Activated CD8-positive, alpha-beta memory T cell treated with anti-CD3 and anti-CD28 coated beads, Interleukin-2, amount 10 ng/mL, durations not matched to agents 7 days and 5 days (primary cell): ENCODE measurements at regions of chr2 and their contacts with region 1.

Region 1: DNA sequence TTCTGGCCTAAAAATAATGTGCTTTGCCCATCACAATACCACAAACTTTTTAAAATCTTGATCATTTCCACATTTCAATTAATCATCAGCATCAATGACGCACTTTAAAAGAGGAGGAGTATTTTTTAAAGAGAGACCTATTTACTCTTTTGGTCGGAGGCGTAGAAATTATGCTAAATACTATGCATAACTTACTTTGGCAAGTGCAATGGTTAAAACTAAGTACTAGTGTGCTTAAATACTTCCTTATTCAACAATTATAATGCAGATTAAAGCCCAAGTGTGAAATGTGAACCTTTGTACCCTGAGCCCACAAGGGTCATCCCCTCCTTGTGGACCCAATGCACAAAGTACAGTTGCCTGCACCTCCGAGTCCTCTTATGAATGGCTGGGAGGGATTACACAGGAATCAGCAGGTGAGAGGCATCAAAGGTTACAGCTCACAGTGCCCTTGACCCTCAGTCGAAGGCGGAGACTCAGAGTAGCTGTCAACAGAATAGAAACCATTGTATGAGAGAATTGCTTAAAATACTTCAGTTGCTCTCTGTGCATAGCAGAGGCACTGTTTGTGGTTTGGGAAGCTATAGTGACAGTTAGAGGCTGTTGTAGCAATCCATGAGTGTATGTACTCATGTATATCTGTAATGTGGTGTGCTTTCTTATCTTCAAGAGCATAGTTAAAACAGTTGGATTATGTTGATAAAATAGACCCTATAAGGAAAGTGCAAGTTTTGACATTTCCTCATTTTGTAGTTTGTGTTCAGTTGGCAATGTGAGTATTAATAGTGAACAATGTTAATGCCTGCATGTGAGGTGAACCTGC is 151.7 kb upstream of the ITGA4 start:
- DNase-seq: peak; percentile 89
- ATAC-seq: peak; percentile 80
- H3K4me3 Mint-ChIP-seq: peak overlapping the region; percentile 59
- H3K27ac Mint-ChIP-seq: peak overlapping the region; percentile 95
- H3K4me1 Mint-ChIP-seq: peaks cover 77% of the 10 kb centered on the region
- H3K27me3 Mint-ChIP-seq: no peaks in the 10 kb centered on the region

Region 2: DNA sequence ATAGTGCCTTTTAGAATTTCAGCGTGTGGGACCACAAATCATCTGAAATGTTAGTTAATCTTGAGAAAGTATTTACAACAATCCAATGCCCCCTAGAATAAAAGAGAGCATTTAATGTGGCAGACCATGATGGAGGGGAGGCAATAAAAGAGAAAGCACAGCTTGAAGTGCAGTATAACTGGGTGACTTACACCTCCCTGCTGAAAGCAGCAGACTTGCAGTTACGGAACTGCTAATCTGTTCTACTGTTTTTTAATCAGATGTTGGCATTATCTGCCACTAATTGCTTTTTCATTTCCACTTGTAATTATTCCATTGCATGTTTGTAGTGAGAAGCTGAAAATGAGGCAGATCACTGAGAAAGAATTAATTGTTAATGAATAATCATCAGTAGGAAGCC is 21.1 kb after region 1 on chr2:
- CTCF ChIA-PET with region 1: no interaction called
- DNase-seq: no peak
- ATAC-seq: no peak
- H3K4me3 Mint-ChIP-seq: no peak overlapping the region
- H3K27ac Mint-ChIP-seq: no peak overlapping the region
- H3K4me1 Mint-ChIP-seq: peaks cover 6% of the 10 kb centered on the region
- H3K27me3 Mint-ChIP-seq: no peaks in the 10 kb centered on the region

Region 3: DNA sequence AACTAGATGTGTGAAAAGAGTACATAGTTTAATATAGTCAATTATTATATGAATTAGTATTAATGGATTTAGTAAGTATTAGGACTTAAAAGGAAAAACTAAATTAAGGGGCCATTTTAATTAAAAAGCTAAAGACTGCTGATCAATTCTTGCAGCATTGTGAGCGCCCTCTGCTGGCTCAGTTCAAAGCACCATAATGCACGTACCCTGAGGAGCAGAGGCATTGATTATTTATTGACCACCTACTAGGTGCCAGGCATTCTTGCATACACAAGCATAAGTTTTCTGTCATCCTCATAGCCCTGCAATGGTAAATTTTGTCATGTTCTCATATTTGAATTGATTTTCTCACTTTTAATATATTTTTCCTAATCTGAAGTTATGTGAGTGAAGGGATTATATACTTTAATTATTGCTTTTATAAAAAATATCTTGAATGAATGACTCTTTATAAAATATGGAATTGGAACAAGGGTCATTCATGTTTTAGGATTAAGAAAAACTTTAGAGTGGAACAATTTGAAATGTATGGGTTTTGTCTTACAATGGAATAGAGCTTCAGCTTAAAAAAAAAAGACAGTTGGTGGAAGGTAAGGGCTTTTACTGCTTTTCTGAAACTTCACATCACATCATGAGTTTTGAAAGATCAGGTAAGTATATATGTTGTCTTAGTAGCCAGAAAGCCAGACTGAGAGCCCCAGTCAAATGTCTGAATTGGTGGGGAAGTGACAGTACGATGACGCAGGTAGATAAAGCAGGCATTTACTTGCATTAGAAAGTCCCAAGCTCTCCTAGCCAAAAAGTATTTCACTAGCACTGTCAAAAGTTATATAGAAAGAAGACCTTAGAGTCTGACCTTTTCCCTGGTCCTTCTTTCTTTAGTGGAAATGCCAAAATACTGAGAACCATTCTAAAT is 161.4 kb after region 1 on chr2:
- CTCF ChIA-PET with region 1: interaction called, 16 read pairs
- DNase-seq: peak; percentile 90
- ATAC-seq: peak; percentile 24
- H3K4me3 Mint-ChIP-seq: peak overlapping the region; percentile 29
- H3K27ac Mint-ChIP-seq: peak overlapping the region; percentile 58
- H3K4me1 Mint-ChIP-seq: peaks cover 90% of the 10 kb centered on the region
- H3K27me3 Mint-ChIP-seq: no peaks in the 10 kb centered on the region